ENCODE measurements at regions of chr19 and their contacts with region 1.

Region 1: GRCh38 chr19:49502866-49503581 is 6.8 kb downstream of the RPS11 start:
- DNase-seq: peak; percentile 70
- H3K4me3 Mint-ChIP-seq: peak overlapping the region; percentile 4
- H3K27ac Mint-ChIP-seq: peak overlapping the region; percentile 99
- H3K4me1 Mint-ChIP-seq: peaks cover 54% of the 10 kb centered on the region
- H3K27me3 Mint-ChIP-seq: peaks cover 4% of the 10 kb centered on the region

Region 2: DNA sequence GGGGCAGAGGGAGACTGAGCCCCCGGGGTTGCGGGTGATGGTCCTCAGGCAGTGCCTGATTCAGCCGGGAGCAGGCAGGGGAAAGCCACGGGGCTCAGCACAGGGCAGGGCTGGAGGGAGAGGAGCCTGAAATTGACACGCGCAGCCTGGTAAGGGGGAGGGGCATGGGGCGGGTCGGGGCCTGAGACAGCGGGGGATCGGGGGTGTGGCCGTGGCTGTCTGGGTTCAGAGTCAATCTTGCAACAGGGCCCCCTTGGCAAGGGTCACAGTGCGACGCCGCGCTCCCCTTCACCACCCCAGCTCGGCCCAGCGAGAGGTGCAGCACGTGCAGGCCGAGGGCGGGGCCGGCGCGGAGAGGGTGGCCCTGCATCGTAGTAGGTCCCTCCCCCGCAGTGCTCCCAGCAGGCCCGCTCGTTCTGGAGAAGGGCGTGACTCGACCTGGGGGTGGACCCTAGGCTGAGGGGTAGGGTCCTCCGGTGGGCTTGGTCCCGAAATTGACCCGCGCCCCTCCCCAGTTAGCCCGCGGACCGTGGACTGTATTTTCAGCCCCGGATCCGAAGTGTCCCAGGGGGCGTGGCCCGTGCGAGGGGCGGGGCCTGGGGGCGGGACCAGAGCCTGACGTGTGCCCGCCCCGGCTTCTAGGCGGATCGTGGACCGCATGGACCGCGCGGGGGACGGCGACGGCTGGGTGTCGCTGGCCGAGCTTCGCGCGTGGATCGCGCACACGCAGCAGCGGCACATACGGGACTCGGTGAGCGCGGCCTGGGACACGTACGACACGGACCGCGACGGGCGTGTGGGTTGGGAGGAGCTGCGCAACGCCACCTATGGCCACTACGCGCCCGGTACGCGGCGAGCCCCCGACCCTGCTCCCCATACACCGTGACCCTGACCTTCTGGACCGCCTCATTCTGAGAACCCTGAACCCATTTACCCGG is 30.8 kb after region 1 on chr19:
- CTCF ChIA-PET with region 1: interaction called, 12 read pairs
- DNase-seq: peak; percentile 89
- H3K4me3 Mint-ChIP-seq: peak overlapping the region; percentile 66
- H3K27ac Mint-ChIP-seq: peak overlapping the region; percentile 77
- H3K4me1 Mint-ChIP-seq: peaks cover 30% of the 10 kb centered on the region
- H3K27me3 Mint-ChIP-seq: peaks cover 40% of the 10 kb centered on the region

Region 3: GRCh38 chr19:49676690-49677231 is 173.7 kb after region 1 on chr19:
- CTCF ChIA-PET with region 1: interaction called, 78 read pairs
- DNase-seq: peak; percentile 99
- H3K4me3 Mint-ChIP-seq: peak overlapping the region; percentile 90
- H3K27ac Mint-ChIP-seq: peak overlapping the region; percentile 97
- H3K4me1 Mint-ChIP-seq: peaks cover 42% of the 10 kb centered on the region
- H3K27me3 Mint-ChIP-seq: no peaks in the 10 kb centered on the region

Measured in activated naive CD4-positive, alpha-beta T cell treated with anti-CD3 and anti-CD28 coated beads, Interleukin-2, amount 10 ng/mL, durations not matched to agents 7 days and 5 days (primary cell).